Activated naive CD4-positive, alpha-beta T cell treated with anti-CD3 and anti-CD28 coated beads for 36 hours (primary cell): ENCODE measurements at regions of chr11 and their contacts with region 1.

Region 1: GRCh38 chr11:93197380-93198214 is at the start of gene SLC36A4:
- DNase-seq: peak; percentile 92
- H3K4me3 Mint-ChIP-seq: peak within 1 kb of the TSS; percentile 80
- H3K27ac Mint-ChIP-seq: peak within 1 kb of the TSS; percentile 94
- H3K4me1 Mint-ChIP-seq: peaks cover 14% of the 10 kb centered on the region
- H3K27me3 Mint-ChIP-seq: no peaks in the 10 kb centered on the region
- total RNA-seq, gene SLC36A4: 13.2 to 13.9 TPM

Region 2: DNA sequence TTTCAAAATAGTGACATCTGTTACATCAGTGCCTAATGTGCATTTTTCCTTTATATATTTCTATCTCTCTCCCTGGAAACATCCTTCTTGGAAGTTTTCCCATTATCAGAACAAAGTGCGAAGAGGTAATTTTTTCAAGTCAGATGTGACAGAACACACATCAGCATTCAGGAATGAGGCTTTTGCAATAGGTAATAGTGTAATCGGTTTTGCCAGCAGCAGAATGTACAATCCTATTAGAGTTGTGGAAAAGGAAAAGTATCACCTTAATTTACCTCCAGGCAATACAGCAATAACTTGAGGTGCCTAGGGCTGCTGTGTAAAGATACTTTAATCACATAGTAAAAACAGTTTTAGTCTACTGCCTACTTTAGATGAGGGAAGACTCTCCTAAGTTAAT is 697.1 kb before region 1 on chr11:
- CTCF ChIA-PET with region 1: no interaction called
- intact Hi-C with region 1: no loop called
- DNase-seq: no peak
- H3K4me3 Mint-ChIP-seq: no peak overlapping the region
- H3K27ac Mint-ChIP-seq: no peak overlapping the region
- H3K4me1 Mint-ChIP-seq: no peaks in the 10 kb centered on the region
- H3K27me3 Mint-ChIP-seq: peaks cover under 1% of the 10 kb centered on the region

Region 3: DNA sequence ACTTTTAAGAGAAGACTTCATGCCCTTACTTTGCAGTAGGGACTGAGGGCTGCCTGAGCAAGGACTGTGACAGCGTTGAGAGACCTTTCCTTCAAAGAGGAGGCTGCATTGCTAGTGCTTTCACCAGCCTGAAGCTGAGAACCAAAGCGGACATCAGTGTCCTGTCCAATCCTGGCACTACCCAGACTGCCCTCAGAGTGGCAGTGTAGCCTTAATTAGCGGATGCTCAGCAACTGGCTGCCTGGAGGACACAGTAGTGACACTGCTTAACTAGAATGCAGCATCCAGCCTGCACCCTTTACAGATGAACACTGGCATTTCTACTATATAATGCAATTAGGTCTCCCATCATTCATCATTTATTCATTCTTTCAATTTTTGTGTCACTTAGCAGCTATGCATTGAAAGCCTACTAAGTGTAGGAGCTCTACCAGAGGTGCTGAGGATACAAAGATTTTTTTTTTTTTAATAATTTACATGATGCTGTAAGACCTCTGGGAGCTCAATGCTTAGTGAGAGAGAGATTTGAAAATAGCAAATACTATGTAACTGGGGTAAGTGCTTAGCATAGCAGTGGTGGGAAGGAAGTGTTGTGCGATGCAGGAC is 37.1 kb after region 1 on chr11:
- CTCF ChIA-PET with region 1: interaction called, 3 read pairs
- intact Hi-C with region 1: loop called (anchors 5 kb)
- DNase-seq: peak; percentile 84
- H3K4me3 Mint-ChIP-seq: no peak overlapping the region
- H3K27ac Mint-ChIP-seq: no peak overlapping the region
- H3K4me1 Mint-ChIP-seq: no peaks in the 10 kb centered on the region
- H3K27me3 Mint-ChIP-seq: peaks cover 21% of the 10 kb centered on the region

Region 4: DNA sequence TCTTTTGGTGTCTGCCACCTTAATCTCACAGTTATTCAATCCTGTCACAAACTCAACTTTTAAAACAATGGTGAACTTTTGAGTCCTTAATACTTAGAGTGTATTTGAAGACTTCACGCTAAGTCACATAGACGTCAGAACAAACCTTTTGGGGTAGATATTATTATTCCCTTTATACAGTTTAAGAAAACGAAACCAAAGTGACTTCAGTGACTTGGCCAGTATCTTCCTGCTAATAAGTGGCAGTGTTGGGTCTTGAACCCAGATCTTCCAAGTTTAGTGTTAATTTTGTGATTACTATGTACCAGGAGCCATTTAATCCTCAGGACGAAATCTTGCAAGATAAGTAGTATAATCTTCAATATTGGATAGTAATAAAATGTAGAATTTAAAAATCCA is 464.6 kb after region 1 on chr11:
- CTCF ChIA-PET with region 1: no interaction called
- intact Hi-C with region 1: loop called (anchors 1 kb)
- DNase-seq: no peak
- H3K4me3 Mint-ChIP-seq: peak overlapping the region; percentile 84
- H3K27ac Mint-ChIP-seq: peak overlapping the region; percentile 93
- H3K4me1 Mint-ChIP-seq: peaks cover 43% of the 10 kb centered on the region
- H3K27me3 Mint-ChIP-seq: no peaks in the 10 kb centered on the region

Region 5: DNA sequence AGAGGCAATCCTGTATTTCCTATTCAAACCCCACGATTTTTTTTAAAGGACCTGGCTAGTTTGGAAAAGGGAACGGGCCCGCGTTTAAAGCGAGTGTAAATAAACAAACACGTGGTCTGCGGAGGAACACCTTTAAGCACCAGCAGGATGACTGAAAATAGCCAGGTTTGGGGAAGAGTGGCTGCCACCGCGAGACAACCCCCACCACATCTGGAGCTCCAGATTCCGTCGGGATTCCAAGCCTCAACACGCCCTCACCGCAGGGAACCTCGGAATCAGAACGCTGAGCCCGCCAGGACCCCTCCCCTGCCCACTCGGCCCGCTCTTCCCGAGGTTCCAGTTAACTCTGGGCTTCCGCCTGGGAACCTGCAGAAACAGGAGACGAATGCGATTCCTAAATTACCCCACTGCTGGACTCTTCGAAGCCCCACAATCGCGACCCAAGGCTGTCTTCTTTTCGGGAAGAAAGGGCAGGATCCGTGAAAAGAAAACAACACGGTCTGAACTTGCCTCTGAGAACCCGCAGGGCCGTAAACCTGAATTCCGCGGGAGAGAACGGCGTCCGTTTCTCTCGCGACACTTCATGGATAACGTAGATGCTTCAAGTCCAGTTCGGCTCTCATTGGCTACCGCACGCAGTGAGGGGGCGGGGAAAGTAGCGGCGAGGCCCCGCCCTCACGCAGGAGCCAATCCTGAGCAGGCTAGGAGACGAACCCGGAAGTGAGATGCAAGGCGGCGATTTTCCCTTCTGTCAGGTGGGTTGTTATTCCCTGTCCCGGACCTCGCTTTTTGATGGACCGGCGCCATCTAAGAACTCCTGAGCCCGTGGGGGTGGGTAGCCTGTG is 1295.9 kb after region 1 on chr11 and contains the starts of genes ANKRD49 and MRE11:
- CTCF ChIA-PET with region 1: no interaction called
- intact Hi-C with region 1: loop called (anchors 5 kb)
- DNase-seq: peak; percentile 97
- H3K4me3 Mint-ChIP-seq: peak within 1 kb of the TSS; percentile 93
- H3K27ac Mint-ChIP-seq: peak within 1 kb of the TSS; percentile 95
- H3K4me1 Mint-ChIP-seq: peaks cover 25% of the 10 kb centered on the region
- H3K27me3 Mint-ChIP-seq: no peaks in the 10 kb centered on the region
- total RNA-seq, gene ANKRD49: 16.3 to 19.1 TPM
- total RNA-seq, gene MRE11: 33.1 to 37.3 TPM